Activated naive CD4-positive, alpha-beta T cell treated with anti-CD3 and anti-CD28 coated beads for 36 hours (primary cell): ENCODE measurements at regions of chr15 and their contacts with region 1.

Region 1: DNA sequence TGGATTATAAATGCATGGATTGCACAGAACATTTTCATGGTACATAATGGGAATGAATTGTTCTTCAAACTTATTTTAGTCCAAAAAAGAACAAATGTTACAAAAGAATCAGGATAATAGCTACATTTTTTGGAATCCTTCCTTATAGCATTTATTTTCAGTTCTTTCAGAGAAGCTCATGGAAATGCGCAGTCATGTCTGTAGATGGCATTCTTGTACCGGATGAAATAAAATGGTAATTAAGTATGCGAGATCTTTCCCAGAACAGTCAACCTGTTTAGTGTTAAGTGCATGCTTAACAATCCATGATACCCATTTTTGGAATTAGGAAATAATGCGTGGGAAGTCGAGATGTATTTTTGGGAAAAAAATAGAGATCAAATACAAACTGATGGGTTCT is 38.2 kb upstream of the GOLGA8B start:
- DNase-seq: no peak
- H3K4me3 Mint-ChIP-seq: no peak overlapping the region
- H3K27ac Mint-ChIP-seq: no peak overlapping the region
- H3K4me1 Mint-ChIP-seq: peaks cover 2% of the 10 kb centered on the region
- H3K27me3 Mint-ChIP-seq: peaks cover 24% of the 10 kb centered on the region

Region 2: GRCh38 chr15:34610354-34610753 is 11.3 kb before region 1 on chr15:
- CTCF ChIA-PET with region 1: interaction called, 15 read pairs
- intact Hi-C with region 1: no loop called
- DNase-seq: no peak
- H3K4me3 Mint-ChIP-seq: no peak overlapping the region
- H3K27ac Mint-ChIP-seq: no peak overlapping the region
- H3K4me1 Mint-ChIP-seq: peaks cover 15% of the 10 kb centered on the region
- H3K27me3 Mint-ChIP-seq: peaks cover 5% of the 10 kb centered on the region